Panc1 (cell line): ENCODE measurements at regions of chr3 and their contacts with region 1.

Region 1: GRCh38 chr3:16600780-16601539 is 4.3 kb downstream of the DAZL start:
- DNase-seq: peak; percentile 45
- ATAC-seq: no peak
- H3K4me3 ChIP-seq: no peak overlapping the region
- H3K27ac ChIP-seq: no peak overlapping the region
- H3K4me1 ChIP-seq: no peaks in the 10 kb centered on the region
- H3K27me3 ChIP-seq: no peaks in the 10 kb centered on the region
- CTCF ChIP-seq: peak; percentile 72; the same call in 1 of the 2 replicates

Region 2: GRCh38 chr3:16884084-16884747 is 283.3 kb after region 1 on chr3:
- CTCF ChIA-PET with region 1: no interaction called
- POLR2A ChIA-PET with region 1: no interaction called
- in situ Hi-C with region 1: no loop called
- intact Hi-C with region 1: loop called (anchors 10 kb)
- DNase-seq: no peak
- ATAC-seq: peak; percentile 82
- H3K4me3 ChIP-seq: peak overlapping the region; percentile 56 to 58
- H3K27ac ChIP-seq: no peak overlapping the region
- H3K4me1 ChIP-seq: no peaks in the 10 kb centered on the region
- H3K27me3 ChIP-seq: no peaks in the 10 kb centered on the region; the same call in 1 of the 2 replicates
- CTCF ChIP-seq: peak; percentile 81

Region 3: DNA sequence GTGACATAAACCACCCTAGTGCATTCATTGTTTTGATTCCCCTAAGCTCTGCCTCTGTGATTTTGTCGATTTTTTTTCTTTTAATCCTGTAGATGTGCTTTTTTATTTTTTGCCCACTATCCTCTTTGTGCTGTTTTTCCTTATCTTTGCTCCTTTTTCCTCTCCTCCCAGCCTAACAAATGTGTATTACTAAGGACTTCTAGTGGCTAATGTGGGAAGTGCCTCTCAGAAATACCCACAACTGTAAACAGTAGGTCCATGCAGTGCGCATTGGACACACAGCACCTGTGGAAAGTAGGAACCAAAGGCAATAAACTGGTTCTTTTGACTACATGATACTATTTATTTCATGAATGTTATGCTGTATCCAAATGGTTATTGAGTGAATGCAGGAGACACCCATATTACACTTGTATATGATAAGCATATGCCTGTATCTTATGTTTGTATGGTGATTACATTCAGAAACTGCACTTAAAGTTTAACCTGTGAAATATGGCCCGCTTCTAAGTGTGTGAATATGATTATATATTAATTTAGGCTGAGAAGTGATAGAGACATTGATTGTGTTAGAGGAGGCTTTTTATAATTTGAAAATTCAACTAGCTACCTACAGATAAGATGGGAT is 431.6 kb after region 1 on chr3:
- CTCF ChIA-PET with region 1: interaction called, 4 read pairs
- POLR2A ChIA-PET with region 1: no interaction called
- in situ Hi-C with region 1: no loop called
- intact Hi-C with region 1: loop called (anchors 10 kb)
- DNase-seq: no peak
- ATAC-seq: peak; percentile 84; the same call in 1 of the 2 replicates
- H3K4me3 ChIP-seq: no peak overlapping the region
- H3K27ac ChIP-seq: no peak overlapping the region
- H3K4me1 ChIP-seq: no peaks in the 10 kb centered on the region
- H3K27me3 ChIP-seq: no peaks in the 10 kb centered on the region
- CTCF ChIP-seq: peak; percentile 63; the same call in 1 of the 2 replicates

Region 4: GRCh38 chr3:17233398-17233800 is 632.4 kb after region 1 on chr3:
- CTCF ChIA-PET with region 1: no interaction called
- POLR2A ChIA-PET with region 1: no interaction called
- in situ Hi-C with region 1: no loop called
- intact Hi-C with region 1: loop called (anchors 1 kb)
- DNase-seq: peak; percentile 24
- ATAC-seq: peak; percentile 84
- H3K4me3 ChIP-seq: no peak overlapping the region
- H3K27ac ChIP-seq: no peak overlapping the region
- H3K4me1 ChIP-seq: no peaks in the 10 kb centered on the region
- H3K27me3 ChIP-seq: no peaks in the 10 kb centered on the region
- CTCF ChIP-seq: peak; percentile 59

Region 5: DNA sequence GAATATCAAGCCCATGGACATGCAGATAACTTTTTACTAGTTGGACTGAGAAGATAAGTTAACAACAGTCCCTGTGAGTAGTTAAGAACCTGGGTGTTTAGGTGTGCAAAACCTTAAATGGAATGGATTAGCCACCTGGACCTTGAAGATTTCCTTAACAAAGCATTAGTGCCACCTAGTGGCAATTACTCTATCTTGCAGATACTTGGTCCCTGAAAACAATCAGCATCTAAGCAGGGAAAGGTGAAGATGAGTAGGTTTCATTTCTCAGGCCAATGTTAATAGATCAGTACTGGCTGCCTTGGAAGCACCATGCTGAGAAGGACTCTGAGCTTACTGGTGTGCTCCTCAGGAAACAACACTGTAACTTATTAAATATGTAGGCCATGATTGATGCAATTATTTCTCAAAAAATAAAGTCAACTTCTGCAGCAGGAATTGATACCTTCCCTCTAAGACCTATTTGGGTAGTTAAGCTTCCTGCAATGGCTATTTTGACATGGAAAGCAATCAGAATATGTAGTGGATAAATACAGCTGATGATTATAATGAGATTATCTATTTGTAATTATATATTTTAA is 812.1 kb after region 1 on chr3:
- CTCF ChIA-PET with region 1: no interaction called
- POLR2A ChIA-PET with region 1: no interaction called
- in situ Hi-C with region 1: no loop called
- intact Hi-C with region 1: loop called (anchors 5 kb)
- DNase-seq: peak; percentile 17
- ATAC-seq: no peak
- H3K4me3 ChIP-seq: no peak overlapping the region
- H3K27ac ChIP-seq: no peak overlapping the region
- H3K4me1 ChIP-seq: no peaks in the 10 kb centered on the region
- H3K27me3 ChIP-seq: no peaks in the 10 kb centered on the region
- CTCF ChIP-seq: peak; percentile 72